Right ventricle myocardium inferior (tissue), 1 donor: ENCODE measurements at regions of chr1 and their contacts with region 1.

Region 1: DNA sequence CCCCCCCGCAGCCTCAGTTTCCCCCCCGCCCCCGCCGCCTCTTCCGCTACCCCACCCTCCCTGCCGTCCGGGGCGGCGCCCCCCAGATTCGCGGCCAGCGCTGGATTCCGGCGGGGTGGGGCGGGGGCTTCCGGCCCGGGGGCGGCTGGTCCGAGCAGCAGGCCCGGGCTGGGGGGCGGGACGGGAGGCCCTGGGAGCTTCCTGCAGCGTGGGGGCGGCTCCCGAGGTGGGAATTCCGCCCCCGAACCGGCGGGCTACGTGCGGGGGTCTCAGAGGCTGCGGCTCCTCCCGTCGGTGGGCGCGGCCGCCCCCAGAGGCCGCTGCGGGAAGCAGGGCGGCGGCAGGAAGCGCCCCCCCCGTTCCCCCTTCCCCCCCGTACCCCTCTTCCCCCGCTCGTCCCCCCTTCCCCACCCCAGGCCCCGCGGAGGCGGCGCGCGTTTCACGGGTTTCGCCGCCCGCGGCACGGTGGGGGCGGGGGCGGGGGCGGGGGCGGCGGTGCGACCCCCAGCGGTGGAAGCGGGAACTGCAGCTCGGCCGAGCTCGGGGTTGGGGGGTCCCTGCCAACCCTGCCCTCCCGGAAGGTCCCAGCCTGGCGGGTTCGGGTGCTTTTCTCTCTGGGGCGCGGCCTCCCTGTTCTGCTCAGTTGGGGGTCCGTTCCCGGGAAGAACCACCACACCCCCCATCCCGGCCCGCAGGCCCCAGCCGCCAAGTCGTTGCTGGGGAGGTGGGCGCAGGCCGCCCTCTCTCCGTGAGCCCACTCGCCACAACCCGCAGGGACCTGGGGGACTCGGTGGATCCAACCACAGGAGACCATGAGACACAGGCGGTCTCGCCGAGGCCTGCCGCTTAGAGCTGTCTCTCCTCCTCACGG is 76.3 kb downstream of the MORN1 start:
- DNase-seq: no peak
- ATAC-seq: peak; percentile 30

Region 2: GRCh38 chr1:2233997-2234761 is 80.9 kb before region 1 on chr1:
- intact Hi-C with region 1: loop called (anchors 2 kb)
- DNase-seq: peak; percentile 98
- ATAC-seq: peak; percentile 84